ENCODE measurements at regions of chr14 and their contacts with region 1.

Region 1: GRCh38 chr14:103546652-103547454 is 15.6 kb downstream of the BAG5 start:
- DNase-seq: peak; percentile 86
- H3K4me3 Mint-ChIP-seq: no peak overlapping the region
- H3K27ac Mint-ChIP-seq: no peak overlapping the region
- H3K4me1 Mint-ChIP-seq: peaks cover 5% of the 10 kb centered on the region
- H3K27me3 Mint-ChIP-seq: no peaks in the 10 kb centered on the region
- CTCF ChIP-seq: peak; percentile 92

Region 2: GRCh38 chr14:103518422-103519042 is 28.3 kb before region 1 on chr14:
- CTCF ChIA-PET with region 1: interaction called, 23 read pairs
- intact Hi-C with region 1: loop called (anchors 2 kb)
- DNase-seq: peak; percentile 82
- H3K4me3 Mint-ChIP-seq: no peak overlapping the region
- H3K27ac Mint-ChIP-seq: peak overlapping the region; percentile 18
- H3K4me1 Mint-ChIP-seq: peaks cover 5% of the 10 kb centered on the region
- H3K27me3 Mint-ChIP-seq: no peaks in the 10 kb centered on the region
- CTCF ChIP-seq: peak; percentile 80